Uterus (tissue), 4 donors: ENCODE measurements at regions of chr9 and their contacts with region 1.

Region 1: GRCh38 chr9:99000469-99001395 is 57.0 kb downstream of the COL15A1 start:
- DNase-seq: no peak
- H3K4me3 ChIP-seq: no peak overlapping the region
- H3K27ac ChIP-seq: no peak overlapping the region
- H3K4me1 ChIP-seq: peaks cover 0 to 6% of the 10 kb centered on the region in 2 donors
- H3K27me3 ChIP-seq: no peaks in the 10 kb centered on the region
- CTCF ChIP-seq: peak in 3 of 4 experiments; percentile 43 to 46 (median 43)
- POLR2A ChIP-seq: no peak

Region 2: GRCh38 chr9:98856982-98857381 is 143.8 kb before region 1 on chr9:
- intact Hi-C with region 1: loop called (anchors 5 kb)
- DNase-seq: no peak
- H3K4me3 ChIP-seq: no peak overlapping the region
- H3K27ac ChIP-seq: no peak overlapping the region
- H3K4me1 ChIP-seq: no peaks in the 10 kb centered on the region
- H3K27me3 ChIP-seq: no peaks in the 10 kb centered on the region
- CTCF ChIP-seq: no peak
- POLR2A ChIP-seq: no peak

Region 3: DNA sequence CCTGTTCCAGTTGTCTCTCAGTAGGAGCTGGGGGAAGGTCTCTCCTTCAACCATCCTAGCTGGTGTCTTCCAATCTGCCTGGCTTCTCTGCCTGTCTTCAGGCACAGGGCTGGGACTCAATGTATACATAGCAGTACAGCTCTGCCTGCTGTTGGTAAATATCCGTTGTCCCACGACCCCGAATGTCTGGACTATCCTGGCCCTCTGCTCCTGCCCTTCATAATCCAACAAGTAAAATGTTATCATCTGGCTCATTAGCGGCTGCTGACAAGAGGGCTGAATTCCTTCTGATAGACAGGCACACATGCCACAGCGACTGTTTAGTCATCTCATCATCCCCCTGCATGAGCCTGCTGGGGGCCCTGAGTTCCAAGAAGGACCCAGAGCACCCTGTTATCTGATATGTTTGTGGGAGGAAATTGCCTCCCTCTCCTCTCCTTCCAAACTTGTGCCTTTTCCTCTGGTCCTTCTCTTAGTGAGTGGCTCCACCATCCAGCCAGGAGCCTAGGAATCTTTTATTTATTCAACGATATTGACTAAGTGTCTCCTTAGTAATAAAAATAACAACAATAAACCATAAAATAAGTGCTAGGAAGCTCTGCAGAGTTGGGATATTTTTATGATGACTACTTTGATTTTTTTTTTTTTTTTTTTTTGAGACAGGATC is 74.6 kb after region 1 on chr9:
- intact Hi-C with region 1: no loop called
- DNase-seq: no peak
- H3K4me3 ChIP-seq: no peak overlapping the region
- H3K27ac ChIP-seq: peak overlapping the region in 1 of 2 donors; percentile 17
- H3K4me1 ChIP-seq: no peaks in the 10 kb centered on the region
- H3K27me3 ChIP-seq: no peaks in the 10 kb centered on the region
- CTCF ChIP-seq: no peak
- POLR2A ChIP-seq: no peak